Caco-2 (cell line): ENCODE measurements at regions of chr10 and their contacts with region 1.

Region 1: DNA sequence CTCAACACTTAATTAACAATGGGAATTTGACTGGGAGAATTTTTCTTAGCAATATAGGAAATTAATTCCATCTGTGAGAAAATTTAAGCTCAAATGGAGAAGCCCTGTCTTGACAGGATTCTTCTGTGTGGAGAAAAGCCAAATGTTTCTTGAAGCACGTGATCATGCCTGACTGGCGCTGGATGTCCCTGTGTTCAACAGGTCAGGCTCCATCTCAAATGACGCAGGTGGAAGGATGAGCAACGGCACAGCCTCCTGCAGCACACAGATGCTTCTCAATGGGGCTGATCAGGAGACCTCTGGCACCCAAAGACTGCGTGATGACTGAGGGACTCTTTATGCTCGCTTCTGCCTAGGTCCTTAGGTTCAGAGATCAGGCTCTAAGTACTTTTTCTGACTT is 143.8 kb downstream of the RSU1 start:
- DNase-seq: no peak
- H3K4me3 ChIP-seq: no peak overlapping the region
- H3K4me3 Mint-ChIP-seq: no peak overlapping the region
- H3K27ac Mint-ChIP-seq: no peak overlapping the region
- H3K4me1 ChIP-seq: no peaks in the 10 kb centered on the region
- H3K4me1 Mint-ChIP-seq: peaks cover 7% of the 10 kb centered on the region
- H3K27me3 ChIP-seq: no peaks in the 10 kb centered on the region
- H3K27me3 Mint-ChIP-seq: no peaks in the 10 kb centered on the region
- CTCF ChIP-seq: no peak

Region 2: GRCh38 chr10:16612115-16612980 is 61.1 kb before region 1 on chr10:
- CTCF ChIA-PET with region 1: no interaction called
- POLR2A ChIA-PET with region 1: no interaction called
- intact Hi-C with region 1: loop called (anchors 1 kb)
- DNase-seq: peak in 1 of 2 experiments; percentile 66
- H3K4me3 ChIP-seq: no peak overlapping the region
- H3K4me3 Mint-ChIP-seq: no peak overlapping the region
- H3K27ac Mint-ChIP-seq: no peak overlapping the region
- H3K4me1 ChIP-seq: no peaks in the 10 kb centered on the region
- H3K4me1 Mint-ChIP-seq: no peaks in the 10 kb centered on the region
- H3K27me3 ChIP-seq: no peaks in the 10 kb centered on the region
- H3K27me3 Mint-ChIP-seq: no peaks in the 10 kb centered on the region
- CTCF ChIP-seq: no peak